ENCODE measurements at regions of chr4 and their contacts with region 1.

Region 1: DNA sequence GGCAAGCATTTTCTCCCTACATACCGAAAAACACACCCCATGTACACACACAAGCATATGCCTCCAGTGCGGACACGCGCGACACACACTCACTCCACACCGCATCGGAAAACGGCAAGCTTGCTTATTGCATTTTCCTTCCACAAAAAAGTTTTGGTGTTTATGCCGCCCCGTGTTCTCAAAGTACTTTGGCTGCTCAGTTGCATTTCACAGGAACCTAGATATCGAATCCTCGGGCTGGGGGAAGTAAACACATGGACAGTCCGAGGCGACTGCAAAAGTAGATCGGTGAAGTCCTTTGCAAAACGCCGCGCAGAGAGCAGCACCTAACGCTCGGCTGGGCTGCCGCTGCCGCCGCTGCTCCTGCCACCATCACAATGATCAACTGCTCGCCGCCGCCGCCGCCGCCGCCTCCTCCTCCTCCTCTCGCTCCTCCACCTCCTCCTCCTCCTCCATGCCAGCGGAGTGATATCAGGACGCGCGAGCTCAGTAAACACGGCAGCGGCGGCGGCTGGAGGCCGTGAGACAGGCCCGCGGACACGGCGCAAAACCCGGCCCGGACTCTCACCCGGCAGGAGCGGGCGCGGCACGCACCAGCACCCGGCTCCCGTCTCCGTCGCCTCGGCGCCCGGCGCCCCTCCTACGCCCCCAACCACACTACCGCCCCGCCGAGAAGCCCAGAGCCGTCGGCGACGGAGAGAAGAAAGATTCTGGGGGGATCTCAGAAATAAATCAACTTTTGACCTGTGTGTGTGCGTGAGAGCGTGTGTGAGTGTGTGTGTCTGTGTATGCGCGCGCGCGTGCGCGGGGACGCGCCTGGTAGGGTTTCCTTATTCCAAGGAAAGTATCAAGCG is at the start of gene MAML3:
- DNase-seq: peak; percentile 83 to 90 (median 86)
- H3K4me3 ChIP-seq: peak within 1 kb of the TSS; percentile 71 to 88
- H3K4me3 Mint-ChIP-seq: peak within 1 kb of the TSS; percentile 87 to 99 (median 95)
- H3K27ac ChIP-seq: peak within 1 kb of the TSS; percentile 4
- H3K27ac Mint-ChIP-seq: peak within 1 kb of the TSS; percentile 78 to 97 (median 92)
- H3K4me1 ChIP-seq: peaks cover 36% of the 10 kb centered on the region
- H3K4me1 Mint-ChIP-seq: peaks cover 21 to 57% (median 32%) of the 10 kb centered on the region in 4 donors
- H3K27me3 ChIP-seq: no peaks in the 10 kb centered on the region
- H3K27me3 Mint-ChIP-seq: peaks cover 0 to 1% of the 10 kb centered on the region in 2 donors
- total RNA-seq, gene MAML3: 2.9 to 3.7 TPM

Region 2: GRCh38 chr4:139177868-139178611 is 975.9 kb before region 1 on chr4:
- CTCF ChIA-PET with region 1: no interaction called
- POLR2A ChIA-PET with region 1: no interaction called
- intact Hi-C with region 1: loop called (anchors 2 kb)
- DNase-seq: peak; percentile 92 to 94 (median 92)
- H3K4me3 ChIP-seq: peak overlapping the region; percentile 88 to 89
- H3K4me3 Mint-ChIP-seq: peak overlapping the region; percentile 89 to 94 (median 92)
- H3K27ac ChIP-seq: peak overlapping the region; percentile 96
- H3K27ac Mint-ChIP-seq: peak overlapping the region; percentile 92 to 97 (median 96)
- H3K4me1 ChIP-seq: peaks cover 17% of the 10 kb centered on the region
- H3K4me1 Mint-ChIP-seq: peaks cover 14 to 29% (median 18%) of the 10 kb centered on the region in 4 donors
- H3K27me3 ChIP-seq: no peaks in the 10 kb centered on the region
- H3K27me3 Mint-ChIP-seq: no peaks in the 10 kb centered on the region

Region 3: DNA sequence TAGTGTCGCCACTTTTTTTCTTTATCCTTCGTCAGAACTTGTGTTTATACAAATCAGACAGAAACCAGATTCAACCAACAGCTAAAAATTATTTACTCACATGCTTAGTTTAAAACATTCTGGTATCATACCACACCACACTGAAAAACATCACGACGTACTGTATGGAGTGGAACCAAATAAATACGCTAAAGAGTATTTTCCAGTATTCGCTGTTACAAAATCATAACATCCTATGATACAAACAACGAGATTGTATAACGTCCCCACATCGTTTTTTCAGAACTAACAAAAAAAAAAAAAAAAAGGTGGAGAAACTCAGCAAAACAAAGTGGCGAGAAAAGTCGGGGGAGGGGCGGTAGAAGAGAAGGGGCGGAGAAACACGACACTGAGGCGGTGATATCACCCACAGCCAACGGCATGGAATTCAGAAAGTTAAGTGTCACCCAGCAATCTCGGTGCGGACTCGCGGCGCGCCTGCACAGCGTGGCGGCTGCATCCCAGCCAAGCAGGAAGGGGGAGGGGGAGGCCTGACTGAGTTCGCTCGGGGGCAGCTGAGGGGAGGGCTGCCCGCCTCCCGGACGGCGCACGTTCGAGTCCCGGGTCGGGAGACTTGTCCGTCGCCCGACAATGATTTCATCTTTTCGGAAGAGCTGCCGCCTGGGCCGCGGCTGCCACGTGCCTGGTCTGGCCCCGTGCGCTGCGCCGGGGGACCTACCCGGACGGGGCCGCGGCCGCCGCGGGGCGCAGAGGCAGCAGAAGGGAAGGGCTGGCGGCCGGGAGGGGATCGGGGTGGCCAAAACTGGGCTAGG is 598.8 kb before region 1 on chr4:
- CTCF ChIA-PET with region 1: no interaction called
- POLR2A ChIA-PET with region 1: interaction called, 6 read pairs
- intact Hi-C with region 1: loop called (anchors 2 kb)
- DNase-seq: peak; percentile 83 to 94 (median 91)
- H3K4me3 ChIP-seq: peak overlapping the region; percentile 63 to 76
- H3K4me3 Mint-ChIP-seq: peak overlapping the region; percentile 92 to 99 (median 97)
- H3K27ac ChIP-seq: peak overlapping the region; percentile 91
- H3K27ac Mint-ChIP-seq: peak overlapping the region; percentile 96 to 100 (median 98)
- H3K4me1 ChIP-seq: peaks cover 41% of the 10 kb centered on the region
- H3K4me1 Mint-ChIP-seq: peaks cover 29 to 82% (median 59%) of the 10 kb centered on the region in 4 donors
- H3K27me3 ChIP-seq: no peaks in the 10 kb centered on the region
- H3K27me3 Mint-ChIP-seq: peaks cover 0 to 1% of the 10 kb centered on the region in 2 donors

Region 4: DNA sequence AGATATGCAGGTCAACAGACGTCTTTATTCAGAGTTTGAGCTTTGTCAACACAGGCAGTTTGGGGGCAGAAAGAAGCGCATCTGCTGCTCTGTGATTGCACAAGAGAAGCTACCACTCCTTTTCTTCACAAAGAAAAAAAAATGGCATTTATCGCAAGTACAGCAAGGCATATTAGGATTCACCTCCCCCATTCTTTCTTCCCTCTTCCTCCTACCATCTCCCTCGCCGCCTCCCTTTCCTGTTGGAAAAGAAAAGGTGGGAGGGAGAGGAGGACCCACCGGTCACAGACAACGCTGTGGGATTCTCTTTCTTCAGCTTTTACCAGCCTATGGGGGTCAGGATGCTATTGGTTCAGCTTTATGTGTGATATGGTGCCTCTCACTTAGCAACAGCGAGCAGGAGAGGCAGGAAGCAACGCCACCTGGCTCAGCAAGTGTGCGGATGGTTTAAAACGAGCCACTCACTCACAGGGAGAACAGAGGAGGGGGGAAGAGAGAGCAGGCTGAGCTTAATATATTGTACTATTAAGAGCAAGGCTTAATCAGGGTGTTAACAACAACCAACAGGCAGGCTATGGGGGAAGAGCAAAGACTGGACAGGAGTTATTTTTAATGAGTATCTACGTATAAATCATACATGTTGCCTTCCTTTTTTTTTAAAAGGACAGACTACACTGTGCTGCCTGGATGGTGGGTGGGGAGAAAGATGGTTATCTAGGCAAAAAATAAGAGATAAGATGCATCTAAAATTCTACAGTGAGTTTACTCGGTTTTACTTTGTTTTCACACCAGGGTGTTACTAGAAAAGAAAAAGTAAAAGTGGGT is 104.7 kb before region 1 on chr4:
- CTCF ChIA-PET with region 1: interaction called, 9 read pairs
- POLR2A ChIA-PET with region 1: interaction called, 7 read pairs
- intact Hi-C with region 1: loop called (anchors 1 kb)
- DNase-seq: peak; percentile 26 to 50 (median 42)
- H3K4me3 ChIP-seq: peak overlapping the region in 1 of 2 donors; percentile 17
- H3K4me3 Mint-ChIP-seq: peak overlapping the region; percentile 76 to 92 (median 85)
- H3K27ac ChIP-seq: no peak overlapping the region
- H3K27ac Mint-ChIP-seq: peak overlapping the region; percentile 1 to 91 (median 85)
- H3K4me1 ChIP-seq: peaks cover 19% of the 10 kb centered on the region
- H3K4me1 Mint-ChIP-seq: peaks cover 14 to 29% (median 16%) of the 10 kb centered on the region in 4 donors
- H3K27me3 ChIP-seq: no peaks in the 10 kb centered on the region
- H3K27me3 Mint-ChIP-seq: peaks cover 3 to 6% of the 10 kb centered on the region in 2 donors

Region 5: DNA sequence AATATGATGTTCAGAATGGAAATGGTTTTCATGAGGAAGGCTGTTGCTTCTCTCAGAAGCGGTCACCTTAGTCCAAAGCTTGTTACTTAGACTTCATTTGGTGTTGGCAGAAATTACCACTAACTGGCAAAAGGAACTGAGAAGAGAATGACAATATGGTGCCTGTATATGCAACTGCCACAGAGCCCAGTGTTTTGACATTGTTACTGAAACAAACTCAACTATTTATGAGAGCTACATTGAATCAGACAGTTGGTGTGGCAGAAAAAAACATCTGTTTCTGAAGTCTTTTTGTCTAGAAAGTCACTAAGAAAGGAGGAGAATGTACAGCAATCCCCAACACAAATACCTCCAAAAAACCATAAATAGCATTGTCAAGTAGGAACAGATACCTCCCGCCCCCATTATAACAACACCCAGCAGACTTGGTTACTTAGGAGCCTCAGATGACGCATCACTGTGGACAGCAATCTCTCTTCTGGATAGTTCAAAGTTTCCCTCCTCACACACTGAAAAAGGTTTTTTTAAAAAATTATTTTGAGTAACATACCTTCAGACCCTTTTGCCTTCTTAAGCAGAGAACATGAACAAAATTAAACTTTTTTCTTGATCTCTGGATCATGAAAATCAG is 92.2 kb before region 1 on chr4:
- CTCF ChIA-PET with region 1: no interaction called
- POLR2A ChIA-PET with region 1: no interaction called
- intact Hi-C with region 1: no loop called
- DNase-seq: no peak
- H3K4me3 ChIP-seq: no peak overlapping the region
- H3K4me3 Mint-ChIP-seq: no peak overlapping the region
- H3K27ac ChIP-seq: no peak overlapping the region
- H3K27ac Mint-ChIP-seq: no peak overlapping the region
- H3K4me1 ChIP-seq: no peaks in the 10 kb centered on the region
- H3K4me1 Mint-ChIP-seq: no peaks in the 10 kb centered on the region
- H3K27me3 ChIP-seq: no peaks in the 10 kb centered on the region
- H3K27me3 Mint-ChIP-seq: peaks cover 4 to 5% of the 10 kb centered on the region in 2 donors

Region 6: DNA sequence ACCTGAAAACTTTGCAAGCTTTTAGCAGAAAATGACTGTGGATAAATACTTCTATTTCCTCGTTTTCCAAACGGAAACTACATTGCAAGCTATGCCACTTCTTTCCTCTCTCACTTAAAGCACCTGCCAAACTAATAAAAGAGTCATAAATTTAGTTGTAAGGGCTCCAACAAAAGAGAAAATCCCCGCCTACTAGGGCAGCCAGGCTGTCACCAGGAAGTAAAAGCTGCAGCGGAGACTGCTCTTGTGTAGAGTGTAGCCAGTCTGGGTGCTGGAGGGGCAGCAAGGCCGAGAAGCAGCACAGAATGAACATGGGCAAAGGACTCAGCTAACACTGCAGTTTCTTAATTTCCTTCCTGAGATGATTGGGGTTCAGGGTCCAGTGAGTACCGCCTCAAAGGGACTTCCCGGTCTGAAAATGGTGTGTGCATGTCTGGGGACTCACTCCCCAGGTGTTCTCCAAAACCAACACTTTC is 89.4 kb after region 1 on chr4:
- CTCF ChIA-PET with region 1: no interaction called
- POLR2A ChIA-PET with region 1: interaction called, 12 read pairs
- intact Hi-C with region 1: no loop called
- DNase-seq: peak in 1 of 5 donors; percentile 5
- H3K4me3 ChIP-seq: no peak overlapping the region
- H3K4me3 Mint-ChIP-seq: peak overlapping the region in 6 of 8 donors; percentile 11 to 69 (median 39)
- H3K27ac ChIP-seq: no peak overlapping the region
- H3K27ac Mint-ChIP-seq: peak overlapping the region in 4 of 7 donors; percentile 22 to 77 (median 64)
- H3K4me1 ChIP-seq: peaks cover 15% of the 10 kb centered on the region
- H3K4me1 Mint-ChIP-seq: peaks cover 14 to 22% (median 18%) of the 10 kb centered on the region in 4 donors
- H3K27me3 ChIP-seq: no peaks in the 10 kb centered on the region
- H3K27me3 Mint-ChIP-seq: peaks cover 1 to 7% of the 10 kb centered on the region in 2 donors

Region 7: GRCh38 chr4:140523857-140524742 is 370.2 kb after region 1 on chr4 and contains the start of gene ELMOD2:
- CTCF ChIA-PET with region 1: no interaction called
- POLR2A ChIA-PET with region 1: interaction called, 6 read pairs
- intact Hi-C with region 1: loop called (anchors 1 kb)
- DNase-seq: peak; percentile 96 to 97 (median 97)
- H3K4me3 ChIP-seq: peak within 1 kb of the TSS; percentile 37 to 90
- H3K4me3 Mint-ChIP-seq: peak within 1 kb of the TSS; percentile 81 to 95 (median 85)
- H3K27ac ChIP-seq: peak within 1 kb of the TSS; percentile 67
- H3K27ac Mint-ChIP-seq: peak within 1 kb of the TSS; percentile 82 to 93 (median 88)
- H3K4me1 ChIP-seq: peaks cover 20% of the 10 kb centered on the region
- H3K4me1 Mint-ChIP-seq: peaks cover 12 to 26% (median 20%) of the 10 kb centered on the region in 4 donors
- H3K27me3 ChIP-seq: no peaks in the 10 kb centered on the region
- H3K27me3 Mint-ChIP-seq: no peaks in the 10 kb centered on the region
- total RNA-seq, gene ELMOD2: 26.2 to 29.8 TPM

Measured in CD4-positive, alpha-beta memory T cell (primary cell).